Activated T-helper 2 cell treated with anti-CD3 and anti-CD28 coated beads, Interferon-gamma antibody, Interleukin-2, Interleukin-4, amounts not matched to agents 10 μg/mL and 5 μg/mL and 100 μg/mL, durations not matched to agents 14 hours and 24 hours and 36 hours (primary cell): ENCODE measurements at regions of chr4 and their contacts with region 1.

Region 1: DNA sequence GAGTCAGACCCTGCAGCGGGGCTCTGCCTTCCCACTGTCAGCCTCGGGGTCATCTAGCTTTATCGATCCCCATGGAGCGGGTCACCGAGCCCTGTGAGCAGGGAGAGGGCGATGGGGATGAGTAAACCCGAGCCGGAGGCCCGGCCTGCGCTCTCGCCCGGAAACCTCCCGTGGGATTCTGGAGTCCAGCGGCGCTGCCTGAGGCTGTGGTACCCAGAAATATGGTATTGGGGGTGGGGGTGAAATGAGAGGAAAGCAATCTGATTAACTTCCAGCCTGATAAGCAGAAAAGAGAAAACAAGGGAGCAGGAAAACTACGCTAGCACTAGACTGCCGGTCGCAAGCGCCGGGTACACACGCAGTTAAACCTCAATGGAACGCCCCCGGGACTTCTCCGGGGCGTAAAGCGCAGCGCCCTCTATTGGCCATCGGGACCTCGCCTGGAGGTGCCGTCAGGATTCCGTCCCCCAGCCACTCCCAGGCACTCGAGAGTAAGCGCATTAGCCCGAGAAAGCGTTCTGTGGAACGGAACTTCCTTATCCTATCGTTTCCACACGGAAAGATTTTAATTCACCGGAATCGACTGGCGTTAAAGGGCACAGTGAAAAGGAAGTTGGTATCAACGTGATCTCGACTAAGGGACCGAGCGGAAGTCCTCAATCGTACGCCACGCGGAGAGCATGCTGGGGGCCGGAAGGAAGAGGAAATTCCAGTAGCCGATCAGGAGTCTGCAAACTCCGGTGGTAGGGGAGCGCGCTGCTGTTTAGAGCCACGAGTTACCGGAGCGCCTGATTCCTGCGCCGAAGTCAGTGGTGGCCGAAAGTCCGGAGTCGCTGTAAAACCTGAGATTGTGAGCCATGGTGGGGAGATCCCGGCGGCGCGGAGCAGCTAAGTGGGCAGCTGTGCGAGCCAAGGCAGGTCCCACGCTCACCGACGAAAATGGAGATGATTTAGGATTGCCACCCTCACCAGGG is at the start of gene UTP3:
- DNase-seq: peak; percentile 89
- H3K4me3 Mint-ChIP-seq: peak within 1 kb of the TSS; percentile 98
- H3K27ac Mint-ChIP-seq: peak within 1 kb of the TSS; percentile 86
- H3K4me1 Mint-ChIP-seq: peaks cover 30% of the 10 kb centered on the region
- H3K27me3 Mint-ChIP-seq: peaks cover 2% of the 10 kb centered on the region
- total RNA-seq, gene UTP3: 44.1 and 46.3 TPM in 2 replicates

Region 2: DNA sequence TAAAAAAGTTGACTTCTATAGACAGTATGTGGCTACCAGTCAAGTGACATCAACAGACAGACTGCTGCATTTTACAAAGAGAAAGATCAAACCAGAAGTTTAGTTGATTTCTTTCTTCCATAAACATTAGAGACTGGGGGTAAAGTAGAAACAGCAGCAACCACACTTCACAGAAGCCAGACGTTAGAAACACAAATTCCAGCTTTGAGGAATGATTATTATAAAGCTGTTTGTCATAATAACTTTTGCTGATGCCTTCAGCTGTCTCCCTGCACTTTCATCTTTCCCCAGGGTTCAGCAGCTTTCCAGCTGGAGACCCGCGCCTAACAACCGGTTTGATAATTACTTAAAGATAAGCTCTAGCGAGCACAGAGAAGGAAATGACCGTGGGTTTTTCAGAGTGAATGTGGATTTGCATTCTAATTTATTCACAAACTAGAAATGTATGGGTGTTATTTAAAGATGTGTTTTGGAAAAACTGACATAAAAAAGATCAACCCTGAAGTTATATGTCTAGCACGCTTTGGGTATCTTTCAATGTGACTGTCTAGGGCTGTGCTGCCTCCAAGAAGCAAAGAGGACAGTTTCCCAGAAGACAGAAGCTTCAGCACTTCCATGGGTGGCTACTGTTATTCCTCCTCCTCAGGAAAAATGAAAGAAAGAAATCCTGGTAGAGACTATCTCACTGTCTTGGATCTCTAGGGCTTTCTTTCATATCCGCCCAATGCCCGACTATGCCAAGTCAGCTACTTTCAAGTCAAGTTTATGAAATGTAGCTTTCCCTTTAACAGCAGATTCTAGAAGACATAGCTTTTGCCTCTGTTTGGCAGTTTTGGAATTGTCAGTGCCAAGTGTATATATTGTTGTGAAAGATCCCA is 74.6 kb before region 1 on chr4:
- intact Hi-C with region 1: no loop called
- DNase-seq: no peak
- H3K4me3 Mint-ChIP-seq: no peak overlapping the region
- H3K27ac Mint-ChIP-seq: no peak overlapping the region
- H3K4me1 Mint-ChIP-seq: peaks cover 2% of the 10 kb centered on the region
- H3K27me3 Mint-ChIP-seq: peaks cover 34% of the 10 kb centered on the region

Region 3: GRCh38 chr4:70651864-70652506 is 36.1 kb before region 1 on chr4:
- intact Hi-C with region 1: loop called (anchors 2 kb)
- DNase-seq: no peak
- H3K4me3 Mint-ChIP-seq: no peak overlapping the region
- H3K27ac Mint-ChIP-seq: no peak overlapping the region
- H3K4me1 Mint-ChIP-seq: peaks cover 3% of the 10 kb centered on the region
- H3K27me3 Mint-ChIP-seq: peaks cover 24% of the 10 kb centered on the region

Region 4: DNA sequence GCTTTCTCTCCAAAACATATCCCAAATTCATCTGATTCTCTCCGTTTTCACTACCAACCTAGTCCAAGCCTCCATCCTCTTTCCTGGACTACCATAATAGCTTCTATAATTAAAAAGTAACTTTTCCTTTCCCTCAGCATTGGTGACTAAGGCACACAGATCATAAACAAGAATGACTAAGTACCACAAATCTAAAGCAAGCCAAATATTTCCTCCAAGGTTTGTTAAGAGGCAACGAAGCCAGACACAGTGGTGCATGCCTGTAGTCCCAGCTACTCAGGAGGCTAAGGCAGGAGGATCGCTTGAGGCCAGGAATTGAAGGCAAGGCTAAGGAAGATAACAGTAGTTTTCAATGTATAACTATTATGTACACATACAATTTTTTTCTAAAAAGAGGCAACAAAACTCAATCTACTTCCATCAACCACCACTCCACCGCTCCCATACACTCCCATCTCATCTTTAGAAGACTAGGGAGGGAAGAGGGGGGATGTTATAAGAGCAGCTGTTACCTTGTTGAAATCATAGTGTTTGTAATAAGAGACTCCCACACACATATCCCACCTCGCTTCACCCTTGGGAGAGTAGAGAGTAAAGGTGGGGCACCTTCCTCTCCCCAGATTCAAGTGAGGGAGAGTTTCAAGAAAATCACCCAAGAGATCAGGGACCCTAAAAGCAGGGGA is 17.6 kb before region 1 on chr4:
- intact Hi-C with region 1: no loop called
- DNase-seq: no peak
- H3K4me3 Mint-ChIP-seq: no peak overlapping the region
- H3K27ac Mint-ChIP-seq: no peak overlapping the region
- H3K4me1 Mint-ChIP-seq: peaks cover 2% of the 10 kb centered on the region
- H3K27me3 Mint-ChIP-seq: peaks cover 38% of the 10 kb centered on the region

Region 5: GRCh38 chr4:70734168-70734954 is 46.3 kb after region 1 on chr4:
- intact Hi-C with region 1: loop called (anchors 2 kb)
- DNase-seq: peak; percentile 41
- H3K4me3 Mint-ChIP-seq: peak overlapping the region; percentile 74
- H3K27ac Mint-ChIP-seq: peak overlapping the region; percentile 79
- H3K4me1 Mint-ChIP-seq: peaks cover 40% of the 10 kb centered on the region
- H3K27me3 Mint-ChIP-seq: no peaks in the 10 kb centered on the region

Region 6: DNA sequence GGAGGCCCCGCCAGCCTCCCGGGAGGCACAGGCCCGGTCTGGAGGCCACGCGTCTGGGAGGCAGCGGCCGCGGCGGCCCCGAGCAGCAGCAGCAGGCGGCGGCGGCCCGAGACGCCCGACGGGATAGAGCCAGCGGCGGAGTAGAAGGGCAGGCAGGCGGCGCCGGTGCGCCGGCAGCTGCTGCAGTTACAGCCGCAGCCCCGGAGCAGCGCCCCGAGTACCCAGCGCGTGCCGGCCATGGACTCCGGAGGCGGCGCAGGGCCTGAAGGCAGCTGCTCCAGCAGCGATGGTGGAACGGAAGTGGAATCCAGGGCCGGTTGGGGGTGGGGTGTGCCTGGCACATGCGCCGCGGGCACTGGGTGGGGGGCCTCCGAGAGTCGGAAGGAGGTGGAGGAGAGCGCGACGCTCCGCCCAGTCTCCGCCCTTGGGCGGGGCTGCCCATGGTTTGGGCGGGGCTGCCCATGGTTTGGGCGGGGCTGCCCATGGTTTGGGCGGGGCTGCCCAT is 151.5 kb after region 1 on chr4 and contains the start of gene GRSF1:
- intact Hi-C with region 1: loop called (anchors 1 kb)
- DNase-seq: peak; percentile 91
- H3K4me3 Mint-ChIP-seq: peak within 1 kb of the TSS; percentile 92
- H3K27ac Mint-ChIP-seq: peak within 1 kb of the TSS; percentile 96
- H3K4me1 Mint-ChIP-seq: peaks cover 45% of the 10 kb centered on the region
- H3K27me3 Mint-ChIP-seq: no peaks in the 10 kb centered on the region
- total RNA-seq, gene GRSF1: 120 and 121 TPM in 2 replicates

Region 7: DNA sequence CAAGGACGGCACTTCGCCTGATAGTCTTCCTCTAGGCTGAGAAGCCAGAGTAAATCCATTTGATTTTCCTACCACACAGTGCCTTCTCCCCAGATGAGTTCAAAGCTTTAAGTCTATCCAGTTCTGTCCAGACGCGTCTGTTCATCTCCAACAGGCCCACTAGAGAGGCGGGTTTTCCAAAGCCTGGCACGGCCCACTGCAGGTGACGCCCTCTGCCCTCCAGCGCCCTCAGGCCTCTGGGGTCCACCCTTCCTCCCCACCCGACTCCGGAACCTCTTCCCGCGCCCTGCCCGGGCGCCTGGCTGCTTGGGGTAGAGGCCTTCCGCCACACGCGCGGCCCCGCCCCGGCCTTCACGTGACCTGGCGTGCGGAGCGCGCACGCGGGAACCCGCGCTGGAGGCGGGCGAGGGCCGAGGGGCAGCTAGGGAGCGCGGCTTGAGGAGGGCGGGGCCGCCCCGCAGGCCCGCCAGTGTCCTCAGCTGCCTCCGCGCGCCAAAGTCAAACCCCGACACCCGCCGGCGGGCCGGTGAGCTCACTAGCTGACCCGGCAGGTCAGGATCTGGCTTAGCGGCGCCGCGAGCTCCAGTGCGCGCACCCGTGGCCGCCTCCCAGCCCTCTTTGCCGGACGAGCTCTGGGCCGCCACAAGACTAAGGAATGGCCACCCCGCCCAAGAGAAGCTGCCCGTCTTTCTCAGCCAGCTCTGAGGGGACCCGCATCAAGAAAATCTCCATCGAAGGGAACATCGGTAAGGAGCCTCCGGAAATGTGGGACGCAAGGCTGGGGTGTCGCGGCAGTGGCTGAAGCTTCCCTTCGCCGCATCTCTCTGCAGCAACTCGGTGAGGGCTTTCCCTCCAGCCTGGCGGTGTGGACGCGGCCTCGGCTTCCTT is 305.3 kb after region 1 on chr4 and contains the start of gene DCK:
- intact Hi-C with region 1: loop called (anchors 2 kb)
- DNase-seq: peak; percentile 83
- H3K4me3 Mint-ChIP-seq: peak within 1 kb of the TSS; percentile 99
- H3K27ac Mint-ChIP-seq: peak within 1 kb of the TSS; percentile 93
- H3K4me1 Mint-ChIP-seq: peaks cover 39% of the 10 kb centered on the region
- H3K27me3 Mint-ChIP-seq: no peaks in the 10 kb centered on the region
- total RNA-seq, gene DCK: 35.1 and 35.3 TPM in 2 replicates